Activated naive CD4-positive, alpha-beta T cell treated with anti-CD3 and anti-CD28 coated beads for 36 hours (primary cell): ENCODE measurements at regions of chr4 and their contacts with region 1.

Region 1: GRCh38 chr4:98601708-98602107 is 56.7 kb downstream of the TSPAN5 start:
- DNase-seq: peak; percentile 63
- H3K4me3 Mint-ChIP-seq: peak overlapping the region; percentile 41
- H3K27ac Mint-ChIP-seq: peak overlapping the region; percentile 84
- H3K4me1 Mint-ChIP-seq: peaks cover 46% of the 10 kb centered on the region
- H3K27me3 Mint-ChIP-seq: no peaks in the 10 kb centered on the region

Region 2: GRCh38 chr4:98260579-98261290 is 341.0 kb before region 1 on chr4:
- CTCF ChIA-PET with region 1: no interaction called
- intact Hi-C with region 1: loop called (anchors 2 kb)
- DNase-seq: peak; percentile 95
- H3K4me3 Mint-ChIP-seq: peak overlapping the region; percentile 93
- H3K27ac Mint-ChIP-seq: peak overlapping the region; percentile 94
- H3K4me1 Mint-ChIP-seq: peaks cover 43% of the 10 kb centered on the region
- H3K27me3 Mint-ChIP-seq: no peaks in the 10 kb centered on the region

Region 3: GRCh38 chr4:98510757-98511517 is 90.8 kb before region 1 on chr4:
- CTCF ChIA-PET with region 1: no interaction called
- intact Hi-C with region 1: loop called (anchors 2 kb)
- DNase-seq: peak; percentile 73
- H3K4me3 Mint-ChIP-seq: peak overlapping the region; percentile 10
- H3K27ac Mint-ChIP-seq: peak overlapping the region; percentile 57
- H3K4me1 Mint-ChIP-seq: peaks cover 53% of the 10 kb centered on the region
- H3K27me3 Mint-ChIP-seq: no peaks in the 10 kb centered on the region

Region 4: GRCh38 chr4:98625920-98626319 is 24.2 kb after region 1 on chr4:
- CTCF ChIA-PET with region 1: interaction called, 5 read pairs
- intact Hi-C with region 1: loop called (anchors 2 kb)
- DNase-seq: no peak
- H3K4me3 Mint-ChIP-seq: no peak overlapping the region
- H3K27ac Mint-ChIP-seq: no peak overlapping the region
- H3K4me1 Mint-ChIP-seq: peaks cover 51% of the 10 kb centered on the region
- H3K27me3 Mint-ChIP-seq: no peaks in the 10 kb centered on the region

Region 5: GRCh38 chr4:98828801-98829200 is 227.1 kb after region 1 on chr4:
- CTCF ChIA-PET with region 1: no interaction called
- intact Hi-C with region 1: loop called (anchors 5 kb)
- DNase-seq: peak; percentile 57
- H3K4me3 Mint-ChIP-seq: no peak overlapping the region
- H3K27ac Mint-ChIP-seq: no peak overlapping the region
- H3K4me1 Mint-ChIP-seq: no peaks in the 10 kb centered on the region
- H3K27me3 Mint-ChIP-seq: no peaks in the 10 kb centered on the region

Region 6: GRCh38 chr4:99504804-99505569 is 903.3 kb after region 1 on chr4:
- CTCF ChIA-PET with region 1: no interaction called
- intact Hi-C with region 1: loop called (anchors 5 kb)
- DNase-seq: no peak
- H3K4me3 Mint-ChIP-seq: no peak overlapping the region
- H3K27ac Mint-ChIP-seq: no peak overlapping the region
- H3K4me1 Mint-ChIP-seq: peaks cover 49% of the 10 kb centered on the region
- H3K27me3 Mint-ChIP-seq: no peaks in the 10 kb centered on the region